Posterior cingulate gyrus (tissue), 11 donors: ENCODE measurements at regions of chr16 and their contacts with region 1.

Region 1: DNA sequence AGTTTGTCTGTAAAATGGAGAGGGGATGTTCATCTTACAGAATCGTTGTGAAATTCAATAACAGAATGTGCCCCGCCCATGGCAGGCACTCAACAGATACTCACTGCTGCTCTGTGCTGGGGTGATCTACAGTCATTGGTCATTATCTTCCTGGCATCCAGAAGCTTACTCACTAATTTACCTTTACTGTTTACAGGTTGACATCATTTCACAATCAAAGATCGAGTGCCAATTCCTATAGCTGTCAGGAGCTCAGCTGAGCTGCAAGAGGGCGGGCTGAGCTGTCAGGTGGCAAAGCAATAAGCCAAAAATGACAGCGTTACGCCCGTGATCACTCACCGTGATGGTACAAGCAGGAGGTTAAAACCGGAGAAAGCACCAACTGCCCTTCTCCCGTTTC is 51.2 kb downstream of the LITAF start:
- DNase-seq: no peak

Region 2: DNA sequence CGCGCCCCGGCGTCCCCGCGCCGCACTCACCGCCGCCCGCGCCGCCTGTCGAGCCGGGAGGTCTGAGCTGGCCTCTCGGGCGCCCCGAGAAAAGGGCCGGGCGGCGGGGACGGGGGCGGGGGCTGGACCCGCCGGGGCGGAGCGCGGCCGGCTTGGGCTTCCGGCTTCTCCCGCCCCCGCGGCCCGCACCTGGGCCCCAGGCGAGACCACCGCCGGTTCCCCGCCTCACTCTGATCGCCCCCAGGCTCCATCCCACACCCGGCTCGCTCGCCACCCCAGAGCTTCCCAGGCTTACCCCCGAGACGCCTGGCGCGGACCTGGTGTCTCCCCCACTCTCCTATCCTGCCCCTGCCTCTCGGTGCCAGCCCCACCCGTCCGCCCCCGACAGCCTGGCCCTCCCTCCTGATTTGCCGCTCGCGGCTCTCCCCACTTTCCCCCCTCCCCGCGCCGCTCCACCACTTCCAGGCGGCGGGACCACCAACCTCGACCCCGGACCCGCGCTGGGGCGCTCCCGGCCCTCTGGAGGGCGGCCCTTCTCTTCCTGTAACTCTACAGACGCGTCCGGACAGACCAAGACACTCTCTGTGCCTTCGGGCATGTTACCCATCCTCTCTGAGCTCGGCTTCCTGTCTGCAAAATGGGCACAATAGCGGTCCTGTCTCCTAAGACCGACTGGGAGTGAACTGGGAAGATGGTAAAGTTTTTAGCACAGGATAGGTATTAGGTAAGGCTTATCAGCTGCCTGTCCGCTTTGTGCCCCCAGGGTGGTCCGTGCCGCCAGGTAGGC is 51.6 kb after region 1 on chr16 and contains the start of gene LITAF:
- intact Hi-C with region 1: loop called (anchors 5 kb)
- DNase-seq: peak in 8 of 10 donors; percentile 13 to 91 (median 41)

Region 3: GRCh38 chr16:11639925-11640899 is 104.7 kb after region 1 on chr16:
- intact Hi-C with region 1: loop called (anchors 1 kb)
- DNase-seq: peak in 4 of 10 donors; percentile 33 to 92 (median 48)

Region 4: DNA sequence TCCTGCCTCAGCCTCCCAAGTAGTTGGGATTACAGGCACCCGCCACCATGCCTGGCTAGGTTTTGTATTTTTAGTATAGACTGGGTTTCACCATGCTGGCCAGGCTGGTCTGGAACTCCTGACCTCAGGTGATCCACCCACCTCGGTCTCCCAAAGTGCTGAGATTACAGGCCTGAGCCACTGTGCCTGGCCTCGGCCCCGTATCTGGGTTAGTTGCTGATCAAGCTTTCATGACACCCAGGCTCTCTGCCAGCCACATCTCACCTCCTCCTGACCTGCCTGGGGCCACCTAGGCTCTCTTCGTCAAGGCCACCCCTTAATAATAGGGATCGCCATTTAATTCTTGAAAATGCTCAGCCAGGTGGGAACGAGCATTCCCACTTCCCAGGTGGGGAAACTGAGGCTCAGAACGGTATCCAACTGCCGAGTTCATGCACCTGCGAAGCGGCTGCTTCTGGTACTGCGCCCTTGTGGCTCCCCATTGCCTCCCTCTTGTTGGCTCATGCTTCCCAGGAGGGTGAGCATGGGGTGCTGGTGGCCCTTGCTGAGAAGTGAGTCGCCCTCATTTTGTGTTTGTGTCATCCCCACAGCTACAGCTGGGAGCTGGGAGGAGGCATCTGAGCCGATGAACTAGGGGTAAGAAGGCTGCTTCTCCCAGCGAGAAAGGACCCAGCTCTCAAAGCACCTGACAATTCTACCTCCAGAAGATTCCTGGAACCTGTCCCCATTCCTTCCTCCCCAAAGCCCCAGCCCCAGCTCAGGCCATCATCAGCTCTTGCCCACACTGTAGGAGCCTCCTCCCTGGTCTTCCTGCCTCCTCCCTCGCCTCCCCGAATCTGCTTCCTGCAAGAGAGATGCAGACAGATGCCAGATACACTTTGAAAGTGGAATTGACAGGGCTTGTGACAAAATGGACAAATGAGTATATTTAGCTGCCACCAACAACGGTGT is 115.4 kb after region 1 on chr16:
- intact Hi-C with region 1: no loop called
- DNase-seq: peak in 2 of 10 donors; percentile 8 to 60

Region 5: GRCh38 chr16:11715246-11715947 is 179.9 kb after region 1 on chr16:
- intact Hi-C with region 1: loop called (anchors 2 kb)
- DNase-seq: no peak

Region 6: DNA sequence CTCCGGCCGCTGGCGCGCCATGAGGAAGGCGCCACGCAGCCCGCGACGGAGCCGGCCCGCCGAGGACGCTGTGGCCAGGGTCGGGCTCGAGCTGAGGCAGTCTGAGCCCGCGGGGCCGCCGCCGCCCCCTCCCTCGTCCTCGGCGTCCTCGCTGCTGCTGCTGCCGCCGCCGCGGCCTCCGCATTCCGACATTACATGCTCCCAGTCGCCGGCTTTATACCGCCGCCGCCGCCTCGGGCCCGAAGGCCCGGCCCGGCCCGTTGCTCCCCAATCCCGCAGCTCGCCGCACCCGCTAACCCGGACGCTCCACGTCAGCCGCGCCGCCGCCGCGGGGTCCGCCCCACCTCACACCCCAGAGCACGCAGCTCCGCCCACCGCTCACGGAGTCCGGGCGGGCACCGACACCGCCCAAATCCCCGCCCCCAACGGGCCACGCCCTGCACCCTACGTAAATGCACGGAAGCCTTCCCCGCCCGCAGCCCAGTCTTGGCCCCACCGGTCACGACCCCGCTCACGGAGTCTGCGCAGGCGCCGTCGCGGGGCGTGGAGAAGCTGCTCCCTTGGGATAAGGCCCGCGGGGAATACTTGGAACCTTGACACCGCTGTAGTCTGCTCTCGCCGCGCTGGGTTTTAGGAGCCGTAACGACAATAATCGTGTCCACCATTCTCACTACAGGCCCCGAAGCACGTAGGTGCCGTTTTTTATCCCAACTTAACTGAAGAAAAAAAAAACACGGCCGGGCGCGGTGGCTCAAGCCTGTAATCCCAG is 207.3 kb after region 1 on chr16 and contains the start of gene TXNDC11:
- intact Hi-C with region 1: no loop called
- DNase-seq: peak; percentile 98 to 100 (median 99)